HepG2 (cell line): ENCODE measurements at regions of chr13 and their contacts with region 1.

Region 1: DNA sequence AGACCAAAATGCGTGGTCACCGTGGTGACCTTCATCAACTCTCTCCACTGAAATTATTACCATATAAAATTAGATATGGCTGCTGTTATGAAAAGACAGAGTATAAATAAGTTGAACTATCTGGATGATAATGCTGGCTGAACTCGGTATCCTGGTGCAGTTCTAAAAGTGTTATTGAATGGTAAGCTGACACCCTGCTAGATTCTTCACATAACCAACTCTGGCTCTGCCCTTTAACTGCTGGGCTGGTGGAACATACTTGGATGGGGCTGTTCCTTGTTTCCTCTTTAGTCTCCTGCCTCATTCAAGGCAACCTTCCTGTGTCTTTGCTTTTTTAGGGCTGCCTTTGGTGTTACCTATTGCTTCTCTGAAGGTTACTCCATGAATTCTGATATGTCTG is 106.9 kb downstream of the FGF9 start:
- DNase-seq: no peak
- ATAC-seq: no peak
- H3K4me3 ChIP-seq: no peak overlapping the region
- H3K27ac ChIP-seq: no peak overlapping the region
- H3K4me1 ChIP-seq: peaks cover 6% of the 10 kb centered on the region; the same call in 1 of the 2 replicates
- H3K27me3 ChIP-seq: no peaks in the 10 kb centered on the region
- CTCF ChIP-seq: no peak
- EP300 ChIP-seq: no peak
- POLR2A ChIP-seq: no peak
- RAD21 ChIP-seq: no peak

Region 2: GRCh38 chr13:21486322-21486721 is 291.5 kb before region 1 on chr13:
- CTCF ChIA-PET with region 1: no interaction called
- POLR2A ChIA-PET with region 1: no interaction called
- in situ Hi-C with region 1: no loop called
- intact Hi-C with region 1: no loop called
- DNase-seq: no peak
- ATAC-seq: no peak
- H3K4me3 ChIP-seq: no peak overlapping the region
- H3K27ac ChIP-seq: no peak overlapping the region
- H3K4me1 ChIP-seq: peaks cover 10% of the 10 kb centered on the region; the same call in 1 of the 2 replicates
- H3K27me3 ChIP-seq: no peaks in the 10 kb centered on the region
- CTCF ChIP-seq: no peak
- EP300 ChIP-seq: no peak
- POLR2A ChIP-seq: no peak
- RAD21 ChIP-seq: no peak

Region 3: GRCh38 chr13:21884965-21885567 is 107.3 kb after region 1 on chr13:
- CTCF ChIA-PET with region 1: no interaction called
- POLR2A ChIA-PET with region 1: no interaction called
- in situ Hi-C with region 1: loop called (anchors 25 kb)
- intact Hi-C with region 1: no loop called
- DNase-seq: no peak
- ATAC-seq: no peak
- H3K4me3 ChIP-seq: no peak overlapping the region
- H3K27ac ChIP-seq: no peak overlapping the region
- H3K4me1 ChIP-seq: no peaks in the 10 kb centered on the region
- H3K27me3 ChIP-seq: peaks cover 1 to 7% of the 10 kb centered on the region in 2 experiments; a peak in 2 of 5 replicates
- CTCF ChIP-seq: no peak
- EP300 ChIP-seq: no peak
- POLR2A ChIP-seq: no peak
- RAD21 ChIP-seq: no peak